ENCODE measurements at regions of chr7 and their contacts with region 1.

Region 1: DNA sequence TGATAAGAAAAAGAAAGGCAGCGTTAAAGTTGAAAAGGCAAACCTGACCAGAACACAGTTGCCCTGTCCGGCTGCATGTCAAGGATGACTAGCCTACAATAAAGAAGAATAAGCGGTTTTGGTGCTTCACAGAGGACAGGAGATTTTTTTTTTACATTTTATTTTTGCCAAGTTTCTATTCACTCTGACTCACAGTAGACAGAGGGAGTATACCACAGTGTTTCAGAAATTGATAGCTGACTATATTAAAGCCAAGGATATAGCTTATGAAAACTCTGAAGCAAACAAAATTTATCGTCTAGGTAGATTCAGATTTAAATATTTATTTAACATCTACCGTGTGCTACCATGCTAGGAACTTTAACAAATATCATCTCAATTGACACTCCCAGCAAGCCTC is 16.9 kb upstream of the POLR1F start:
- DNase-seq: no peak
- H3K4me3 ChIP-seq: no peak overlapping the region
- H3K27ac ChIP-seq: no peak overlapping the region
- H3K4me1 ChIP-seq: no peaks in the 10 kb centered on the region
- CTCF ChIP-seq: no peak

Region 2: DNA sequence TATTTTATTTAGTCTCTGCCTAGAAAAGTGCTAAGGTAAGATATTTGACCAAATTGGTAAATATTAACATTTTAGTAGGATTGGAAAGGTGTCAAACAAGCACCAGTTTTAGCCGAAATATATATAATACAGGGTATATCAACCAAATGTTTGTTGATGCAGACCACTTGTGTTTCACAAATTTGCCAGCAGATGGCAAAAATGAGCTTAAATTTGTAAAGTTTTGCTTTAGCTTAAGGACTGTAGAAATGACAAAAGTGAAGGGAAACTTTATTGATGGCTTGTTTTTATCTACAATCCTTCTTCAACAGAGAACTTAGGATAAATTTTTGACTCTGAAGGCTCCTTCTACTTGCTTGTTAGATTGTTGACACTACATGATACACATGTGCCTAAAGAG is 12.1 kb before region 1 on chr7:
- CTCF ChIA-PET with region 1: interaction called, 3 read pairs
- POLR2A ChIA-PET with region 1: interaction called, 10 read pairs
- intact Hi-C with region 1: no loop called
- DNase-seq: peak; percentile 61
- H3K4me3 ChIP-seq: no peak overlapping the region
- H3K27ac ChIP-seq: no peak overlapping the region
- H3K4me1 ChIP-seq: peaks cover 6% of the 10 kb centered on the region
- CTCF ChIP-seq: peak; percentile 80